Naive thymus-derived CD4-positive, alpha-beta T cell (primary cell): ENCODE measurements at regions of chr1 and their contacts with region 1.

Region 1: GRCh38 chr1:77948841-77949424 is 29.9 kb downstream of the FUBP1 start:
- DNase-seq: no peak
- ATAC-seq: no peak
- H3K4me3 ChIP-seq: no peak overlapping the region
- H3K4me3 Mint-ChIP-seq: no peak overlapping the region
- H3K27ac ChIP-seq: no peak overlapping the region
- H3K27ac Mint-ChIP-seq: peak overlapping the region in 5 of 9 donors; percentile 25 to 83 (median 60)
- H3K4me1 ChIP-seq: no peaks in the 10 kb centered on the region
- H3K4me1 Mint-ChIP-seq: peaks cover 9 to 34% (median 21%) of the 10 kb centered on the region in 7 donors
- H3K27me3 ChIP-seq: no peaks in the 10 kb centered on the region
- H3K27me3 Mint-ChIP-seq: no peaks in the 10 kb centered on the region

Region 2: GRCh38 chr1:77582905-77583304 is 366.0 kb before region 1 on chr1:
- CTCF ChIA-PET with region 1: no interaction called
- POLR2A ChIA-PET with region 1: no interaction called
- intact Hi-C with region 1: loop called in 1 of 2 experiments (anchors 10 kb)
- DNase-seq: no peak
- ATAC-seq: no peak
- H3K4me3 ChIP-seq: no peak overlapping the region
- H3K4me3 Mint-ChIP-seq: no peak overlapping the region
- H3K27ac ChIP-seq: no peak overlapping the region
- H3K27ac Mint-ChIP-seq: no peak overlapping the region
- H3K4me1 ChIP-seq: no peaks in the 10 kb centered on the region
- H3K4me1 Mint-ChIP-seq: peaks cover 7 to 26% (median 17%) of the 10 kb centered on the region in 7 donors
- H3K27me3 ChIP-seq: no peaks in the 10 kb centered on the region
- H3K27me3 Mint-ChIP-seq: no peaks in the 10 kb centered on the region

Region 3: GRCh38 chr1:77961392-77961791 is 12.5 kb after region 1 on chr1:
- CTCF ChIA-PET with region 1: no interaction called
- POLR2A ChIA-PET with region 1: no interaction called
- intact Hi-C with region 1: loop called (anchors 2 kb)
- DNase-seq: no peak
- ATAC-seq: no peak
- H3K4me3 ChIP-seq: no peak overlapping the region
- H3K4me3 Mint-ChIP-seq: no peak overlapping the region
- H3K27ac ChIP-seq: no peak overlapping the region
- H3K27ac Mint-ChIP-seq: peak overlapping the region in 4 of 9 donors; percentile 1 to 28 (median 12)
- H3K4me1 ChIP-seq: peaks cover 0 to under 1% of the 10 kb centered on the region in 2 donors
- H3K4me1 Mint-ChIP-seq: peaks cover 17 to 45% (median 29%) of the 10 kb centered on the region in 7 donors
- H3K27me3 ChIP-seq: no peaks in the 10 kb centered on the region
- H3K27me3 Mint-ChIP-seq: no peaks in the 10 kb centered on the region

Region 4: DNA sequence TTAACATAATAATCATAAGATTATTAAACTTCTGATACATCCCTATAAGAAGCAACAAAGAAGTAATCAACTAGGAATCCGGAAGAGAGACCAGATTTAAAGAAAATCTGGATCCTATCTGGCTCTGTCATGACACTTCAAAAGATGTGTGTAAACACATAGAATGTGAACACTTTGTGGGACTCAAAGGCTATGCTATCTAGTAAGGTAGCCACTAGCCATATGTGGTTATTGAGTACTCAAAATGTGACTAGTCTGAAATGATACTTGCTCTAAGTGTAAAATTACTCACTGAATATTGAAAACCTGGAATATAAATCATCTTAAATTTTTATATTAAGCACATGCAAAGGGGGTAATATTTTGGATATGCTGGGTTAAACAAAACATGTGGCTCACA is 21.3 kb after region 1 on chr1:
- CTCF ChIA-PET with region 1: interaction called, 3 read pairs
- POLR2A ChIA-PET with region 1: no interaction called
- intact Hi-C with region 1: loop called in 1 of 2 experiments (anchors 2 kb)
- DNase-seq: no peak
- ATAC-seq: no peak
- H3K4me3 ChIP-seq: no peak overlapping the region
- H3K4me3 Mint-ChIP-seq: peak overlapping the region in 5 of 10 donors; percentile 23 to 75 (median 56)
- H3K27ac ChIP-seq: no peak overlapping the region
- H3K27ac Mint-ChIP-seq: no peak overlapping the region
- H3K4me1 ChIP-seq: peaks cover 43 to 58% of the 10 kb centered on the region in 2 donors
- H3K4me1 Mint-ChIP-seq: peaks cover 41 to 90% (median 77%) of the 10 kb centered on the region in 7 donors
- H3K27me3 ChIP-seq: no peaks in the 10 kb centered on the region
- H3K27me3 Mint-ChIP-seq: no peaks in the 10 kb centered on the region